Caco-2 (cell line): ENCODE measurements at regions of chr20 and their contacts with region 1.

Region 1: DNA sequence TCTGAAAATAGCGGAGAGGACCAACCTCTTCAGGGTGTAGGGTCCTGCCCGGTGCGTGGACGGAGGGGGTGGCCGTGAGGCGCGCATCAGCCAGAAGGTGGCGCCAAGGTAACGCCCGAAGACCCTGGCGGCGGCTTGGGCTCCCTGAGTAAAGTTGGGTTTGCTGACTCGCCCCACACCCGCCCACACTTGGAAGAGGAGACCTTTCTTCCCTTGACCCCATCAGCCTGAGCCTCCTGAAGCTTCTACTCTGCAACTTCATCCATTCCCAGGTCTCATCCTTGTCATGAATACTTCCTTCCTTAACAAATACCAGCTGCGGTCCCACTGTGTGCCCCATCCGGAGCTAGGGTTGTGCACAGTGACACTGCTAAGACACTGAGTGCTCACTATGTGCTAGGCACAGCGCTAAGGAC is 14.6 kb downstream of the CD40 start:
- DNase-seq: peak; percentile 81 to 90
- H3K4me3 ChIP-seq: no peak overlapping the region
- H3K4me3 Mint-ChIP-seq: no peak overlapping the region
- H3K27ac Mint-ChIP-seq: no peak overlapping the region
- H3K4me1 ChIP-seq: no peaks in the 10 kb centered on the region
- H3K4me1 Mint-ChIP-seq: no peaks in the 10 kb centered on the region
- H3K27me3 ChIP-seq: peaks cover 7% of the 10 kb centered on the region
- H3K27me3 Mint-ChIP-seq: peaks cover 36% of the 10 kb centered on the region
- CTCF ChIP-seq: peak; percentile 99

Region 2: GRCh38 chr20:45823949-45824835 is 308.5 kb before region 1 on chr20:
- CTCF ChIA-PET with region 1: no interaction called
- POLR2A ChIA-PET with region 1: no interaction called
- intact Hi-C with region 1: no loop called
- DNase-seq: peak in 1 of 2 experiments; percentile 63
- H3K4me3 ChIP-seq: no peak overlapping the region
- H3K4me3 Mint-ChIP-seq: no peak overlapping the region
- H3K27ac Mint-ChIP-seq: no peak overlapping the region
- H3K4me1 ChIP-seq: no peaks in the 10 kb centered on the region; the same call in 1 of the 2 replicates
- H3K4me1 Mint-ChIP-seq: peaks cover 9% of the 10 kb centered on the region
- H3K27me3 ChIP-seq: no peaks in the 10 kb centered on the region
- H3K27me3 Mint-ChIP-seq: no peaks in the 10 kb centered on the region
- CTCF ChIP-seq: peak; percentile 26 to 45

Region 3: DNA sequence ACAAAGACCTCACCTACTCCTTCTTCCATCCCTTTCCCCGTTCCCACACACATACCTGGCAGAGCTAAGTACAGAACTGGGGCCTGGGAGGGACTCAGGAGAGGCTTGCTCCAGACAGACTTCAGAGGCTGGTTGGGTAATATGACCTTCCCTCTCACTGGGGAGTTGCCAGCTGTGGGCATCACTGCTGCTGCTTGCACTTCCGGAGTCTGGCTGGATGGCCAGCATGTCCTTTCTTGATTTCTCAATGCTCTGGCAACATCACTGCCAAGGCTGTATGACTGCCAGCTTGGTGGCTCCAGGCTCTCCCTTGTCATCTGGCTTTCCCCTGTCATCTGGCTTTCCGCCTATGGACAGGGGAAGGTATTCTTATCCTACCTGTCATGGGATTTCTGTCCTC is 127.8 kb after region 1 on chr20:
- CTCF ChIA-PET with region 1: no interaction called
- POLR2A ChIA-PET with region 1: no interaction called
- intact Hi-C with region 1: loop called (anchors 5 kb)
- DNase-seq: no peak
- H3K4me3 ChIP-seq: no peak overlapping the region
- H3K4me3 Mint-ChIP-seq: no peak overlapping the region
- H3K27ac Mint-ChIP-seq: no peak overlapping the region
- H3K4me1 ChIP-seq: no peaks in the 10 kb centered on the region
- H3K4me1 Mint-ChIP-seq: no peaks in the 10 kb centered on the region
- H3K27me3 ChIP-seq: no peaks in the 10 kb centered on the region; the same call in 1 of the 2 replicates
- H3K27me3 Mint-ChIP-seq: peaks cover 12% of the 10 kb centered on the region
- CTCF ChIP-seq: no peak

Region 4: DNA sequence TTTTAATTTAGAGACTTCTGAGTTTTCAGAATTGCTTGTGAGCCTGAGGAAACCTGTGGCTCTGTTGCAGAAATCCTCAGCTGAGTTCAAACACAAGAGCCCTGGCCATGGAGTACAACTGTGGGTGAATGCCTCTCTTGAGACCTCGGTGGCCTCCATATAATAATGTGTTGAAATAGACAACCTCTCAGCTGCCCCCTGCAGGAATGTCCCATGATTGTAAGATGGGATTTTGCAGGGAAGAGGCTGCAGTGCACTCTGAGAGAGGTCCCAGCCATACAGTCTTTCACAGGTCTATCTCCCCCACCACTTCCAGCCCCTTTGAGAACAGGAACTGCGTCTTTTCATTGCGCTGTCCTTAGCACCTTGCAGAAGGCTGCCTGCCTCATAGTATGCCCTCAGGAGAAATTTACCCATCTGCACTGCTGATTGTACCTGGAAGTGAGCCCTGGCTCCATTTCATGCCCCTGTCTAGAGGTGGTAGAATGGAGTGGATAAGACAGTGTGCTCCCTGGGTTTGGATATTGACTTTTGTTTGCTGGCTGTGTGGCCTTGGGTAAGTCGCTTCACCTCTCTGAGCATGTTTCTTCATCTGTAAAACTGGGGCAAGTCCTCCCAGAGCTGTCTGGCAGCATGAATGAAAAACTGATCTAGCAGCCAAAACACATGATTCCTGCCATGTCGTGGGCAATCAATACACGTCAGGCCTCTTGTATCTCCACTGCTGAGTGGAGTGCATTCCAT is 192.4 kb after region 1 on chr20:
- CTCF ChIA-PET with region 1: no interaction called
- POLR2A ChIA-PET with region 1: no interaction called
- intact Hi-C with region 1: loop called (anchors 1 kb)
- DNase-seq: peak in 1 of 2 experiments; percentile 74
- H3K4me3 ChIP-seq: no peak overlapping the region
- H3K4me3 Mint-ChIP-seq: no peak overlapping the region
- H3K27ac Mint-ChIP-seq: no peak overlapping the region
- H3K4me1 ChIP-seq: no peaks in the 10 kb centered on the region
- H3K4me1 Mint-ChIP-seq: no peaks in the 10 kb centered on the region
- H3K27me3 ChIP-seq: peaks cover 3% of the 10 kb centered on the region; the same call in 1 of the 2 replicates
- H3K27me3 Mint-ChIP-seq: peaks cover 18% of the 10 kb centered on the region
- CTCF ChIP-seq: peak; percentile 61 to 71

Region 5: DNA sequence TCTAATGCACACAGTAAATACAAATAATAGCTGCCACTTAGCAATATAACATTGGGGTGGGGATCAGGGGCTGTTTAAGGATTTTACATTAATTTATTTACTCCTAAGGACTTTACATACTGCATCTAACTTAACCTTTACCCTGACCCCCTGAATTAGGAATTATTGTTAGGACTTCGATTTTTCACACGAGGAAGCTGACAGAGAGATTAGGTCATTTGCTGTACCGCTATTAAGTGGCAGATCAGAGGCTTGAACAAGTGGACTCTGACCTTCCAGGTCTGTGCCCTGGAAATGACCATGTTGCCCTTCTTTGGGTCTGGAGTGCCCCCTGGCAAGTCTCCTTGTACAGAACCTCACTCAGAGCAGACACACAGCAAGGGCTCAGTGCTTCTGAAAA is 278.9 kb after region 1 on chr20:
- CTCF ChIA-PET with region 1: interaction called, 5 read pairs
- POLR2A ChIA-PET with region 1: no interaction called
- intact Hi-C with region 1: loop called (anchors 1 kb)
- DNase-seq: no peak
- H3K4me3 ChIP-seq: no peak overlapping the region
- H3K4me3 Mint-ChIP-seq: no peak overlapping the region
- H3K27ac Mint-ChIP-seq: no peak overlapping the region
- H3K4me1 ChIP-seq: peaks cover 14% of the 10 kb centered on the region; the same call in 1 of the 2 replicates
- H3K4me1 Mint-ChIP-seq: no peaks in the 10 kb centered on the region
- H3K27me3 ChIP-seq: no peaks in the 10 kb centered on the region; the same call in 1 of the 2 replicates
- H3K27me3 Mint-ChIP-seq: peaks cover 18% of the 10 kb centered on the region
- CTCF ChIP-seq: no peak

Region 6: GRCh38 chr20:46477225-46477624 is 344.5 kb after region 1 on chr20:
- CTCF ChIA-PET with region 1: no interaction called
- POLR2A ChIA-PET with region 1: no interaction called
- intact Hi-C with region 1: no loop called
- DNase-seq: no peak
- H3K4me3 ChIP-seq: no peak overlapping the region
- H3K4me3 Mint-ChIP-seq: no peak overlapping the region
- H3K27ac Mint-ChIP-seq: no peak overlapping the region
- H3K4me1 ChIP-seq: no peaks in the 10 kb centered on the region
- H3K4me1 Mint-ChIP-seq: no peaks in the 10 kb centered on the region
- H3K27me3 ChIP-seq: no peaks in the 10 kb centered on the region; the same call in 1 of the 2 replicates
- H3K27me3 Mint-ChIP-seq: peaks cover 27% of the 10 kb centered on the region
- CTCF ChIP-seq: no peak

Region 7: GRCh38 chr20:46487628-46488027 is 354.9 kb after region 1 on chr20:
- CTCF ChIA-PET with region 1: no interaction called
- POLR2A ChIA-PET with region 1: no interaction called
- intact Hi-C with region 1: loop called (anchors 2 kb)
- DNase-seq: no peak
- H3K4me3 ChIP-seq: no peak overlapping the region
- H3K4me3 Mint-ChIP-seq: no peak overlapping the region
- H3K27ac Mint-ChIP-seq: no peak overlapping the region
- H3K4me1 ChIP-seq: no peaks in the 10 kb centered on the region
- H3K4me1 Mint-ChIP-seq: peaks cover 7% of the 10 kb centered on the region
- H3K27me3 ChIP-seq: no peaks in the 10 kb centered on the region; the same call in 1 of the 2 replicates
- H3K27me3 Mint-ChIP-seq: peaks cover 43% of the 10 kb centered on the region
- CTCF ChIP-seq: no peak